Dorsolateral prefrontal cortex (tissue), 120 donors: ENCODE measurements at regions of chr7 and their contacts with region 1.

Region 1: DNA sequence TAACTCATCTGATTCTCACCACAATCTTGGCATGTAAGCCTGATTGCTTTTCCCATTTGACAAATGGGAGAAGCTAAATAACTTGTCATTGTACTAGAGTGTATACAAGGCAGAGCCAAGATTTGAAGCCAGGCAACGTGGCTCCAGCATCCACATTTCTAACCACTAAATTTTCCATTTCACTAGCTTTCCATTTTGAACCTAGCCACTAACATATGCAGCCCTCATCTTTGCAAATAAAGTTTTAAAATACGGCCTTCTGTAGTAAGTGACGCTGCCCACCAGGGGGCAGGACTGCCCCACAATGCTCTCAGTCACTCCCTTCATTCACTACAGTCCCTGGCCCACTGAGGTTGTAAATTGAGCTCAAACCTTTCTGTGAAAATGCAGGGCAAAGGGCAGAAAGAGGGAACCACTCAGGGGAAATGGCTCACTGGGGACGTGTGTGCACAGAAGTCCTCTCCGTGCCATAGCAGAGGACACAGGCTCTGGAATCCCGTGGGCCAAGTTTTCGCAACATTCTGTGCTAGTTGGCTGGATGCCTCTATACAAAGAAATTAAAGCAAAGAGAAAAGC is 315.7 kb downstream of the TNS3 start:
- DNase-seq: peak in 8 of 10 donors; percentile 40 to 76 (median 66)
- H3K4me3 ChIP-seq: no peak overlapping the region
- H3K27ac ChIP-seq: peak overlapping the region in 1 of 59 donors; percentile 46
- H3K27me3 ChIP-seq: peaks cover 0 to 7% (median 0%) of the 10 kb centered on the region in 45 donors
- CTCF ChIP-seq: peak; percentile 75 to 99 (median 93)

Region 2: DNA sequence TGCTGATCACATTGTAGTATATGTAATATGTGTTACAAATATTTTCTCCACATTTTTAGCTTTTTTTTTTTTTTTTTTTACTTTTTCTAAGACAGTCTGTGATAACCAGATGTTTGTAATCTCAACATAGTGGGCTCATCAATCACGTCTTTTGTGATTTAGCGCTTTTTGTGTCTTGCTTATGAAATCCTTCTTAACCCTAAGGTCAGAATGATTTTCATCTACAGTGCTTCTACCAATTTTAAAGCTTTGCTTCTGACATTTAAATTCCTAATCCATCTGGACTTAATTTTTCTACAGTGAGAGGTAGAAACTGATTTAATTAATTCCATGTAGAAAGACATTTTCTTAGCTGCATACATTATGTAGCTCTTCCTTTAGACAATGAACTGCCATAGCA is 310.7 kb before region 1 on chr7:
- intact Hi-C with region 1: no loop called
- DNase-seq: no peak
- H3K4me3 ChIP-seq: no peak overlapping the region
- H3K27ac ChIP-seq: no peak overlapping the region
- H3K27me3 ChIP-seq: peaks cover 0 to 2% (median 0%) of the 10 kb centered on the region in 45 donors
- CTCF ChIP-seq: no peak

Region 3: GRCh38 chr7:47327698-47328391 is 61.6 kb after region 1 on chr7:
- intact Hi-C with region 1: loop called in 1 of 2 experiments (anchors 5 kb)
- DNase-seq: peak in 9 of 10 donors; percentile 83 to 93 (median 91)
- H3K4me3 ChIP-seq: peak overlapping the region; percentile 12 to 66 (median 44)
- H3K27ac ChIP-seq: peak overlapping the region in 57 of 59 donors; percentile 1 to 90 (median 76)
- H3K27me3 ChIP-seq: peaks cover 0 to 6% (median 0%) of the 10 kb centered on the region in 45 donors
- CTCF ChIP-seq: peak in 14 of 56 donors; percentile 15 to 54 (median 20)

Region 4: GRCh38 chr7:47386273-47386835 is 120.1 kb after region 1 on chr7:
- intact Hi-C with region 1: loop called in 1 of 2 experiments (anchors 5 kb)
- DNase-seq: peak in 3 of 10 donors; percentile 50 to 56 (median 52)
- H3K4me3 ChIP-seq: no peak overlapping the region
- H3K27ac ChIP-seq: peak overlapping the region in 9 of 59 donors; percentile 12 to 57 (median 20)
- H3K27me3 ChIP-seq: peaks cover 0 to 66% (median 0%) of the 10 kb centered on the region in 45 donors
- CTCF ChIP-seq: no peak

Region 5: GRCh38 chr7:47435889-47436312 is 169.7 kb after region 1 on chr7:
- intact Hi-C with region 1: loop called (anchors 5 to 10 kb)
- DNase-seq: peak in 8 of 10 donors; percentile 42 to 82 (median 69)
- H3K4me3 ChIP-seq: no peak overlapping the region
- H3K27ac ChIP-seq: no peak overlapping the region
- H3K27me3 ChIP-seq: peaks cover 0 to 4% (median 0%) of the 10 kb centered on the region in 45 donors
- CTCF ChIP-seq: peak in 55 of 56 donors; percentile 40 to 79 (median 64)

Region 6: GRCh38 chr7:47571331-47572093 is 305.3 kb after region 1 on chr7:
- intact Hi-C with region 1: loop called in 1 of 2 experiments (anchors 10 kb)
- DNase-seq: peak in 5 of 10 donors; percentile 29 to 61 (median 45)
- H3K4me3 ChIP-seq: peak overlapping the region in 21 of 59 donors; percentile 4 to 42 (median 21)
- H3K27ac ChIP-seq: peak overlapping the region in 52 of 59 donors; percentile 0 to 82 (median 63)
- H3K27me3 ChIP-seq: no peaks in the 10 kb centered on the region
- CTCF ChIP-seq: no peak

Region 7: GRCh38 chr7:47818796-47819606 is 552.8 kb after region 1 on chr7:
- intact Hi-C with region 1: loop called (anchors 1 to 5 kb)
- DNase-seq: peak; percentile 49 to 84 (median 66)
- H3K4me3 ChIP-seq: no peak overlapping the region
- H3K27ac ChIP-seq: no peak overlapping the region
- H3K27me3 ChIP-seq: no peaks in the 10 kb centered on the region
- CTCF ChIP-seq: peak; percentile 76 to 99 (median 96)

Region 8: GRCh38 chr7:47945261-47946001 is 679.2 kb after region 1 on chr7:
- intact Hi-C with region 1: loop called in 1 of 2 experiments (anchors 10 kb)
- DNase-seq: peak in 9 of 10 donors; percentile 67 to 88 (median 74)
- H3K4me3 ChIP-seq: no peak overlapping the region
- H3K27ac ChIP-seq: no peak overlapping the region
- H3K27me3 ChIP-seq: no peaks in the 10 kb centered on the region
- CTCF ChIP-seq: peak; percentile 73 to 94 (median 86)

Region 9: GRCh38 chr7:48101968-48102367 is 835.7 kb after region 1 on chr7:
- intact Hi-C with region 1: no loop called
- DNase-seq: no peak
- H3K4me3 ChIP-seq: no peak overlapping the region
- H3K27ac ChIP-seq: no peak overlapping the region
- H3K27me3 ChIP-seq: no peaks in the 10 kb centered on the region
- CTCF ChIP-seq: peak in 1 of 56 donors; percentile 18